ENCODE measurements at regions of chr18 and their contacts with region 1.

Region 1: DNA sequence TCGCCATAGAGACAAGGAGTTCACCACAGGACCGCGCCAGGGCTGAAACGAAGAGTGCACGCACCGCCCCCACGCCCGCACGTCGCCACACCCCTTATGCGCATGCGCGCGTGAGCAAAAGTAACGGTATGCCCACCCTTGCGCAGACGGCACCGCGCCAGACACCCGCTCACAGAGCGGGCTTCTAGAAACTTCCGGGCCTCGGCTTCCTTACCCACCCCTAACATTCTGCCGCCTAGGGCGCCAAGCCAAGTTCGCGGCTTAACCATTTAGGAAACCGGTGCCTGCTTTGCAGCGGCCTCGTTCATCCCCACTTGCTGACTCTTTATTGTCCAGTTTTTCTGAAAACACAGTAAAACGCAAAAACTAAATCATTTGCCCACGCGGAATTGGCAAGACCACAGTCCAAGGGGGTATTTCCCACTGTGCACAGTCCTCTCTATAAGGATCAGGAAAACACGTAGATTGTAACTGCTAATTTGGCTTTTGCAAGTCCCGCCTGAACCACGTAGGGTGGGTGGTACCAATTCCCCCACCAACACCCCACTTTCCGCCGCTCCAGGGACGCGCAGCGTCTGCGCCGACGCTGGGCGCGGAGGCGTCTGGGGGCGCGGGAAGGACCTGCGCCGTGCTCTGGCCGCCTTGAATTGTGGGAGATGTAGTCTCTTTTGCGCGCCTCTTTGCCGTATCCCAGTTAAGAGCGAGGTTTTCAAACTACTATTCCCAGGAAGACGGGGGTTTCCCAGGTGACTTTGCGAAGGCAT is at the starts of genes FBXO15 and TIMM21:
- DNase-seq: peak; percentile 96
- ATAC-seq: peak; percentile 85
- H3K4me3 Mint-ChIP-seq: peak within 1 kb of the TSS; percentile 97
- H3K27ac Mint-ChIP-seq: peak within 1 kb of the TSS; percentile 99
- H3K4me1 Mint-ChIP-seq: peaks cover 48% of the 10 kb centered on the region
- H3K27me3 Mint-ChIP-seq: peaks cover 1% of the 10 kb centered on the region
- CTCF ChIP-seq: no peak
- total RNA-seq, gene FBXO15: 0.69 and 0.98 TPM in 2 replicates
- total RNA-seq, gene TIMM21: 23.3 and 27.0 TPM in 2 replicates

Region 2: GRCh38 chr18:74063023-74063422 is 84.9 kb before region 1 on chr18:
- CTCF ChIA-PET with region 1: no interaction called
- POLR2A ChIA-PET with region 1: interaction called, 3 read pairs
- intact Hi-C with region 1: loop called (anchors 1 kb)
- DNase-seq: no peak
- ATAC-seq: peak; percentile 76
- H3K4me3 Mint-ChIP-seq: peak overlapping the region; percentile 12
- H3K27ac Mint-ChIP-seq: peak overlapping the region; percentile 85
- H3K4me1 Mint-ChIP-seq: peaks cover 57% of the 10 kb centered on the region
- H3K27me3 Mint-ChIP-seq: peaks cover 9% of the 10 kb centered on the region
- CTCF ChIP-seq: no peak

Region 3: DNA sequence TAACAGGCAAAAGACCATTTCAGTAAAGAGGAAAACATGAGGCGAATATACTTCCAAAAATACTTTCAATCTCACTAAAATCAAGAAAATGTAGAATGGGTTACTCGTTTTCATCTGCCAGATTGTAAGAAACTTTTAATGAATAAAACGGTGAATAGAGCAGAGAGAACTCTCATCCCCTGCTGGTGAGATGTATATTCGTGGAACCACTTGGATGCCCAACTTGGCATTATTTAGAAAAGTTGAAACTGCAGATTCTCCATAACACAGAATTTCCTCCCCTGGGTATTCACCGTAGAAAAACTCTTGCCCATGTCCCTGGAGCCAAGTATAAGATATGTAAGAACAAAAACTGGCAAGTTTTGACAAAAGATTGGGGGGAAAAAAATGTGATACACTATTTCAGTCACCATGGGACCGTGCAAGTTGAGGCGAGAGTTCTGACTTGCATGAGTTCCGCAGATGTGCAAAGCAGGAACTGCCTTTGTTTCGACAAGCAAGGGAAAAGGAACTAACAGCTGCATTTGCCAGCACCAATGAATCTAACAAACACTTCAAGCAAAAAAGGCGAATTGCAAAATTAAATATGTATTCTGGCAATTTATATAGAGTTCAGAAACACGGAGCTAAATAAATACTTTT is 15.2 kb after region 1 on chr18:
- CTCF ChIA-PET with region 1: no interaction called
- POLR2A ChIA-PET with region 1: no interaction called
- intact Hi-C with region 1: no loop called
- DNase-seq: no peak
- ATAC-seq: peak; percentile 65
- H3K4me3 Mint-ChIP-seq: no peak overlapping the region
- H3K27ac Mint-ChIP-seq: peak overlapping the region; percentile 8
- H3K4me1 Mint-ChIP-seq: peaks cover 17% of the 10 kb centered on the region
- H3K27me3 Mint-ChIP-seq: no peaks in the 10 kb centered on the region
- CTCF ChIP-seq: no peak

Region 4: DNA sequence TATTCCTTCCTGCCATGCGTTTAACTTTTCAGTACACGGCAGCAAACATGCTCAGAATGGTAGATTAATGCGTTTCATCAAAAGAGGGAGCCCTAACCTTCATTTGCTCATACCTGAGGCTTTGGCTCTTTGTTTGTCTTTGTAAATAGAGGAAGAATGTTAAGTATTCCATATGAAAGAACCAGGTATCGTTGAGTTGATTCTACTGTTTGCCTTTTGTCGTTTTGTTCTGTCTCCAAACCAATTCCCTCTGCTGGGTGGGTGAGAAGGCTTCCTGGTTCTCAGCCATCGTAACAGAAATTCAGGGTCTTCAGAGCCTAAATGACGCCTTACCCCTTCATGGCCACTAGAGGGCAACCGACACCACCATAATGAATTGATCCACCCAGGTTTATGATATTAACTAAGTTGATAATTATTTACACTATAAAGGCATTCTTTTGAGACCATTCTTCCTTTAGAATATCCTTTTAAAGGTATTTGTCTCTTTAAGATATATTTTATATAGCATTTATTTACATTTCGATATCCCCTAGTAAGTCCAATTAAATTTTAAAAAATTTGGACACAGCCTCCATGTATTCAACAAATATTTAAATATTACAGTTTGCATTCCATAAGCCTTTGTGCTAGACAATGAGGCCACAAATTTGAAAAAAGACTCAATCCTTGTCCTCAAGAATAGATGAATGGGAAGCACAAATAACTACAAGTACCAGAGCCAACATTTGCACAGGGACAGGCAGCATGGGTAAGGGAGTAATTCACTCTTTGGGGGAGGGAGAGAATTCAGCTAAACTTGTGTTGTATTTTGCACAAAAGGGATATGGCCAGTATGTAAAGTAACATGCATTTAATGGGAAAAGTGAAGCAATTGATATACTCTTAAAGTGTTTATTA is 48.5 kb after region 1 on chr18:
- CTCF ChIA-PET with region 1: no interaction called
- POLR2A ChIA-PET with region 1: no interaction called
- intact Hi-C with region 1: loop called (anchors 1 kb)
- DNase-seq: no peak
- ATAC-seq: peak; percentile 95
- H3K4me3 Mint-ChIP-seq: peak overlapping the region; percentile 78
- H3K27ac Mint-ChIP-seq: peak overlapping the region; percentile 79
- H3K4me1 Mint-ChIP-seq: peaks cover 22% of the 10 kb centered on the region
- H3K27me3 Mint-ChIP-seq: peaks cover 8% of the 10 kb centered on the region
- CTCF ChIP-seq: no peak

Region 5: GRCh38 chr18:74291771-74292540 is 144.0 kb after region 1 on chr18 and contains the start of gene CYB5A:
- CTCF ChIA-PET with region 1: no interaction called
- POLR2A ChIA-PET with region 1: interaction called, 3 read pairs
- intact Hi-C with region 1: loop called (anchors 1 kb)
- DNase-seq: peak; percentile 99
- ATAC-seq: peak; percentile 97
- H3K4me3 Mint-ChIP-seq: peak within 1 kb of the TSS; percentile 97
- H3K27ac Mint-ChIP-seq: peak within 1 kb of the TSS; percentile 91
- H3K4me1 Mint-ChIP-seq: peaks cover 49% of the 10 kb centered on the region
- H3K27me3 Mint-ChIP-seq: no peaks in the 10 kb centered on the region
- CTCF ChIP-seq: no peak
- total RNA-seq, gene CYB5A: 46.2 and 47.2 TPM in 2 replicates

Region 6: GRCh38 chr18:74353169-74353775 is 205.3 kb after region 1 on chr18:
- CTCF ChIA-PET with region 1: no interaction called
- POLR2A ChIA-PET with region 1: no interaction called
- intact Hi-C with region 1: loop called (anchors 5 kb)
- DNase-seq: no peak
- ATAC-seq: peak; percentile 40
- H3K4me3 Mint-ChIP-seq: no peak overlapping the region
- H3K27ac Mint-ChIP-seq: no peak overlapping the region
- H3K4me1 Mint-ChIP-seq: peaks cover 13% of the 10 kb centered on the region
- H3K27me3 Mint-ChIP-seq: no peaks in the 10 kb centered on the region
- CTCF ChIP-seq: no peak